Right ventricle myocardium inferior (tissue), 1 donor: ENCODE measurements at regions of chr3 and their contacts with region 1.

Region 1: DNA sequence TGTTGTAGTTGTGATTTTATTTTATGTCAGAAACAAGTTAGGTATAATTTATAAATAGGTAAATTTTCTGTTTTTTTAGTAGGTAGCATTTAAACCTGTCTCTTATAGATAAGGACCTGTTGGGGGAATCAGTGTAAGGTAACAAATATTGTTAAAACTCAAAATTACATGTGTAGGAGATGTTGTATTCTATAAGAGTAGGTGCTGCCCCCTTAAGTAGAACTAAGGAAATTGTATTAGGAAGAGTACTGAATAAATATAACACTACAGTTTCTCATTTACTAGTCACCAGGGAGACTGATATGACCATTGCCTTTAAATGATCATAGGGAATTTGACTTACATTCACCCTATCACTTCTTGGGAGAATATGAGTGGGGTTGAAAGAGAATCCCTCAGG is 31.2 kb downstream of the SLC25A36 start:
- DNase-seq: no peak
- ATAC-seq: no peak

Region 2: DNA sequence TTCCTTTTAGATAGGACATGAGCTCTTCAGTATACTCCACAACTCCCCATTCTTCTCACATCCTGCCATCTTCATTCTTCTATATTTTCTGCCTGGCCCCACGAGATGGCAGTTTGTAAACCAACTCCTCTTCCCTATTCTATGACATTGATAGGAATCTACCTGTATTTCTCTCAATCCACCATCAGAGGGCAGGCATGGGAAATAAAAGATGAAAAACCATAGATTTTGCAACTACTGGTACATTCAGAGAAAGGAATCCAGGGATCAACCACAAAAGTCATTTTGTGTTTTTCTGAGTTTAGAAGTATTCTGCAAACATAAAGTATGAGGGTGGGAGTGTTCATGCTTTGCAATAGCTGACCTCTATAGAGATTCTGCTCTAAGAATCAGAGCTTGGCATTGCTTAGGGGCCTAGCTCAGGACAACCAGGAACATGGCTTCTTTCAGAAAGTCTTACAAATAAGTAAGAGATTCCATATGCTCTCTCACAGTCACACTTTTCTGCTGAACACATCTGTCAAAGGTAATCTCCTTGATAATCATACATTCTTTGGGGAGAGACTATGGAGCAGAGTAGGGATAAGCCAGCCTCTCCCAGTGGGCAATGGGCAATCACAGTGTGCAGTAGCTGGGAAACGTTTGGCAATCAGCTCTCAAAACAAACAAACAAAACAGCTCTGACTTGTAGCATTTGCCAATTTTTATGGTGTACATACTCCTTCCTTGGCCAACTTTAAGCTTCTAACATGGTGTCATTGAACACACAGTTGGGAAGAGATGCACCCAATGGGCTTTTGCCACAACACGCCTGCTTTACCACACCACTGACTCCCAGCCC is 74.3 kb before region 1 on chr3:
- intact Hi-C with region 1: loop called (anchors 5 kb)
- DNase-seq: no peak
- ATAC-seq: peak; percentile 38

Region 3: GRCh38 chr3:141336672-141337522 is 364.1 kb after region 1 on chr3:
- intact Hi-C with region 1: no loop called
- DNase-seq: no peak
- ATAC-seq: no peak